ENCODE measurements at regions of chr17 and their contacts with region 1.

Region 1: DNA sequence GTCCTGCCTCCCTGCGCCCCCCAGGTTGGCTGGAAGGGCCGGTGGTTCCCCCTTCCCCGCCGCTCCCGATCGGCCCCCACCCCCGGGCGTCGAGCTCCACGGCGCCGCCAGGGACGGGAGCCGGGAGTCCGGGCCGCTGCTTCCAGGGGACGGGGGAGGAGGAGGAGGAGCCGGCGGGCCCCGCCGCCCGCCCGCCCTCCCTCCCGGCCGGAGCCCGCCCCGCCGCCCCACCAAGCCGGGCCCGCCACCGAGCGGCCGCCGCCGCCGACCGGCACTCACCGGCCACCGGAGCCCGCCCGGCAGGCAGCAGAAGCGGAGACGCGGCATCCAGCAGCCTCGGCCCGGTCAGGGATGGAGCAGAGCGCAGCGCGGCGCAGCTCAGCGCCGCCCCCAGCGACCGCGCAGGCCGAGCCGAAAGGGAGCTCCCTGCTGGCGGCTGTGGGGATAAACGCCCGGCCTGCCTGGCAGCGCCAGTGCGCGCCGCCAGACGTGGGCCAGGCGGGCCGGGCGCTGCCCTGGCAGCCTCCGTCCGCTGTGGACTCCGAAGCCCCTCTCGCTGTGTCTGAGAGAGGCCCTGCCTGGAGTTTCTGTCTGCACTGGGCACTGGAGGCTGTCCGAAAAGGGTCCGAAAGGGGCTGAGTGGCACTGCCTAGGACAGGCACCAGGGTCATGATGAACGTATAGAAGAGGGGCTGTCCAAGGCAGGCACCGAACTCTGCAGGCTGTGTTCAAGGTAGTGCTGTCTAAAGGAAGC is at the start of gene MYO18A:
- H3K4me3 ChIP-seq: peak within 1 kb of the TSS; percentile 57
- H3K27ac ChIP-seq: peak within 1 kb of the TSS; percentile 20; the same call in 1 of the 2 replicates
- H3K4me1 ChIP-seq: peaks cover 3% of the 10 kb centered on the region; the same call in 1 of the 2 replicates
- CTCF ChIP-seq: peak; percentile 92

Region 2: GRCh38 chr17:29140051-29140621 is 40.1 kb before region 1 on chr17:
- CTCF ChIA-PET with region 1: interaction called, 175 read pairs
- POLR2A ChIA-PET with region 1: interaction called, 15 read pairs
- H3K4me3 ChIP-seq: peak overlapping the region; percentile 2; the same call in 1 of the 2 replicates
- H3K27ac ChIP-seq: no peak overlapping the region; the same call in 1 of the 2 replicates
- H3K4me1 ChIP-seq: peaks cover 15% of the 10 kb centered on the region
- CTCF ChIP-seq: no peak

Region 3: DNA sequence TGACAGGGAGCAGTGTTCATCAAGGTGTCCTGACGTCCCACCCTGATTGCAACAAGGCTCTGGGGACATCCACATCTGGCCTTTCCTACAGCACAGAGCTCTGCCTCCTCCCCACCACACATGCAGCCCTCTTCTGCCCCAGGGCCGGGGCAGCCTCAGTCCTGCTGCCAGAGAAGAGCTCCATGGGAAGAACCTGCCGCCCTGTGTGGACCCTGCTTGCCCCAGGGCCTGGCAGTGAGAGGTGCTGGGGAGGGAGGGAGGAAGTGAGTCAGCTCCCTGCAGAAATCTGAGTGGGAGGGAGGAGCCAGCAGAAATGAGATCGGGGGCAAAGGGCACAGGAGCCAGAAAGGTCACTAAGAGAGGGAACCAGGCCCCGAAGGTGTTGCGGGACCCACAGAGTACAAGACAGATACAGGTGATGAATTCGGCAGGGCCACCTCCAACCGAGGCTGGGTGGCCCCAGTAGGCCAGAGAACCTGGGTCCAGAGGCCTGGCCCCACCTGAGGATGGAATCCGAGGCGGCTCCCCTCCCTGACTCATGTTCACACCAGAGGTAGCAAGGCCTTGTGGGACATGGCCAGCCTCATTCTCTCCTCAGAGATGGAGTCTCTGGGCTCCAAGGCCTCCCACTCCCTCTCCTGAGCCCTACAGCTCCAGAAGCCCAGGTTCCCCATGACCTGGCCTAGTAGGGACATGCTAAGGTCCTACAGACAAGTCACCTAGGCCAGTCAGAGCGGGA is 24.8 kb before region 1 on chr17:
- CTCF ChIA-PET with region 1: interaction called, 175 read pairs
- POLR2A ChIA-PET with region 1: interaction called, 6 read pairs
- H3K4me3 ChIP-seq: no peak overlapping the region
- H3K27ac ChIP-seq: no peak overlapping the region
- H3K4me1 ChIP-seq: peaks cover 10% of the 10 kb centered on the region
- CTCF ChIP-seq: no peak

Region 4: GRCh38 chr17:29168079-29168758 is 12.0 kb before region 1 on chr17:
- CTCF ChIA-PET with region 1: interaction called, 13 read pairs
- POLR2A ChIA-PET with region 1: interaction called, 4 read pairs
- H3K4me3 ChIP-seq: no peak overlapping the region
- H3K27ac ChIP-seq: no peak overlapping the region
- H3K4me1 ChIP-seq: no peaks in the 10 kb centered on the region
- CTCF ChIP-seq: no peak

Region 5: GRCh38 chr17:29212681-29213121 is 32.5 kb after region 1 on chr17:
- CTCF ChIA-PET with region 1: interaction called, 65 read pairs
- POLR2A ChIA-PET with region 1: no interaction called
- H3K4me3 ChIP-seq: no peak overlapping the region
- H3K27ac ChIP-seq: no peak overlapping the region
- H3K4me1 ChIP-seq: no peaks in the 10 kb centered on the region
- CTCF ChIP-seq: no peak

Measured in HEK293 (cell line).